CD4-positive, alpha-beta T cell (primary cell): ENCODE measurements at regions of chr3 and their contacts with region 1.

Region 1: GRCh38 chr3:4350789-4351163 is 47.6 kb downstream of the SETMAR start:
- DNase-seq: peak in 13 of 14 experiments; percentile 6 to 86 (median 39)
- ATAC-seq: peak; percentile 94
- H3K4me3 ChIP-seq: peak overlapping the region; percentile 61
- H3K4me3 Mint-ChIP-seq: peak overlapping the region; percentile 64
- H3K27ac ChIP-seq: no peak overlapping the region
- H3K27ac Mint-ChIP-seq: peak overlapping the region; percentile 10
- H3K4me1 ChIP-seq: peaks cover 4% of the 10 kb centered on the region
- H3K4me1 Mint-ChIP-seq: peaks cover 19% of the 10 kb centered on the region
- H3K27me3 ChIP-seq: no peaks in the 10 kb centered on the region
- H3K27me3 Mint-ChIP-seq: no peaks in the 10 kb centered on the region
- CTCF ChIP-seq: peak; percentile 87

Region 2: DNA sequence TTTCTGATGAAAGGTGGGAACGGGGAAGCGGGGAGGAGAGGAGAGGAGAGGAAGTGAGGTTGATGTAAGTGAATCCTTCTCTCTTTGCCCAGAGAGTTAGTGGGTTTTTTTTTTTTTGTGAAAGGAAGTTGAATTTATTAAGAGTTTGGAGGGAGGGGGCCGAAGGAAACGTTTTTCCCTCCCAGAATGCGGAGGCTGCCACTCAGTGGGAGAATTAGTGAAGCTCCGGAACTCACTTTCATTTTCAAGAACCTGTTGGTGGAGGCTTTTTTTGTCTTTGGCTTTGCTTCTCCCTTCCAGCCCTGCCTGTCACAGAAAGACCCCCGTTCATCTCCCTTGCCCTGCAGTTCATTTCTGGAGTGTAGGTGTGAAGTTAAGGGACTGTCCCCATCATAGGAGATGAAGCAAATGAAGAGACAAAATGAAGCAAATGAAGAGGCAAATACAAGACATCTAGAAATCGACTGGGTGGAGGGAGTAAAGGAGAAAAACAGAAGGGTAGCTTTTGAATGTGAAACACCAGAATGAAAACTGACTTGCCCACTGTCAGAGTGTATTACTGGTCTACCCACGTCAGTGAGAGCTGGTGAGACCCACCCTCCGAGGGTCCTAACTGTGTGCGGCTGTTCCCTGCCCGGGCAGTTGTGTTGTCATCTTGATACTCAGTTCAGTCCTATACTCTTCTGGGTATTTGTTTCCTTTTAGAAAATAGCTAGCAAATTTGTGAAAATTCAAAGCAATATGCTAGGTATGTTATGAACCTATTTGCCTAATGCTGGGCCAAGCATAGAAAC is 233.9 kb after region 1 on chr3:
- CTCF ChIA-PET with region 1: interaction called, 3 read pairs
- POLR2A ChIA-PET with region 1: no interaction called
- intact Hi-C with region 1: loop called in 1 of 2 experiments (anchors 5 kb)
- DNase-seq: peak in 4 of 14 experiments; percentile 35 to 58 (median 45)
- ATAC-seq: peak; percentile 48
- H3K4me3 ChIP-seq: peak overlapping the region; percentile 41
- H3K4me3 Mint-ChIP-seq: peak overlapping the region; percentile 88
- H3K27ac ChIP-seq: peak overlapping the region in 1 of 2 donors; percentile 42
- H3K27ac Mint-ChIP-seq: peak overlapping the region; percentile 79
- H3K4me1 ChIP-seq: peaks cover 35% of the 10 kb centered on the region
- H3K4me1 Mint-ChIP-seq: peaks cover 80% of the 10 kb centered on the region
- H3K27me3 ChIP-seq: no peaks in the 10 kb centered on the region
- H3K27me3 Mint-ChIP-seq: no peaks in the 10 kb centered on the region
- CTCF ChIP-seq: no peak

Region 3: DNA sequence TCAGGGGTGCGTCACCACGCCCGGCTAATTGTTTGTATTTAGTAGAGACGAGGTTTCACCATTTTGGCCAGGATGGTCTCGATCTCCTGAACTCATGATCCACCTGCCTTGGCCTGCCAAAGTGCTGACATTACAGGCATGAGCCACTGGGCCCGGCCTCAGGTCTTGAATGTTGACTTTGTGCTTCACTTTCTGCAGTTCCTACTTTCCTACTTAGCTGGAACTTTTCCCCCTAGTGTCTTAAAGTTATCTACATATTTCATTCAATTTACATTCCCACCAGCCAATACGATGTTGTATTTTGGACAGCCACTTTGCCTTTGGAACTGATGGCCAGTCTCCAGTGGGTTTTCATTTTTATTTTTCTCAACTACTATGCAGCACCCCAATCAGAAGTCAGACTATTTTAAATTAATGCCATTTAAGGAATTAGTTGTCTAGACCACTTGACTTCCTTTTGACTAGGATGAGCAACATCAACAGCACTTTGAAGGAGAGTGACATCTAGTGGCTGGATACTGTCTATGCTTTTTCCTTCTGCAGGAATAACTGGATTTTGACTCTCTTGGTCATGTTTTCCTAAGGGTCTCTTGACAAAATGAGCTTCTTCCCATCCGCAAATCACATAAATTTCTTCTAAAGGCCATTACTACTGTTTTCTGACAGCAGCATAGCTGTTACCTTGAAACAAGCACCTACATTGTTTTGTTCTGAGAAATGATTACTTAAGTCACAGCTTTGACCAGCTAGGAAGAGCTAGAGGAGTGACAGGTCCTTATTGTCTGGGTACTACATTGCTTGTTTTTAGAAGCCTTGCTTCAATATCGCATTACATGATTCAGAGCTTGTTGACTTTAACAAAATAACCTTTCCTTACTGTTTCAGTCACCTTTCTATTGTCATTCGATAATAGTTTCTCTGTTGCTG is 282.6 kb after region 1 on chr3:
- CTCF ChIA-PET with region 1: interaction called, 19 read pairs
- POLR2A ChIA-PET with region 1: interaction called, 3 read pairs
- intact Hi-C with region 1: loop called (anchors 1 kb)
- DNase-seq: peak in 3 of 14 experiments; percentile 61 to 70 (median 69)
- ATAC-seq: peak; percentile 70
- H3K4me3 ChIP-seq: no peak overlapping the region
- H3K4me3 Mint-ChIP-seq: no peak overlapping the region
- H3K27ac ChIP-seq: no peak overlapping the region
- H3K27ac Mint-ChIP-seq: no peak overlapping the region
- H3K4me1 ChIP-seq: no peaks in the 10 kb centered on the region
- H3K4me1 Mint-ChIP-seq: peaks cover 7% of the 10 kb centered on the region
- H3K27me3 ChIP-seq: no peaks in the 10 kb centered on the region
- H3K27me3 Mint-ChIP-seq: no peaks in the 10 kb centered on the region
- CTCF ChIP-seq: peak; percentile 88

Region 4: GRCh38 chr3:5057857-5058324 is 707.1 kb after region 1 on chr3:
- CTCF ChIA-PET with region 1: interaction called, 4 read pairs
- POLR2A ChIA-PET with region 1: interaction called, 3 read pairs
- intact Hi-C with region 1: loop called in 1 of 2 experiments (anchors 2 kb)
- DNase-seq: peak; percentile 53 to 87 (median 63)
- ATAC-seq: peak; percentile 96
- H3K4me3 ChIP-seq: no peak overlapping the region
- H3K4me3 Mint-ChIP-seq: no peak overlapping the region
- H3K27ac ChIP-seq: no peak overlapping the region
- H3K27ac Mint-ChIP-seq: no peak overlapping the region
- H3K4me1 ChIP-seq: peaks cover 2% of the 10 kb centered on the region
- H3K4me1 Mint-ChIP-seq: no peaks in the 10 kb centered on the region
- H3K27me3 ChIP-seq: no peaks in the 10 kb centered on the region
- H3K27me3 Mint-ChIP-seq: peaks cover 3% of the 10 kb centered on the region
- CTCF ChIP-seq: peak; percentile 79